ENCODE measurements at regions of chr18 and their contacts with region 1.

Region 1: DNA sequence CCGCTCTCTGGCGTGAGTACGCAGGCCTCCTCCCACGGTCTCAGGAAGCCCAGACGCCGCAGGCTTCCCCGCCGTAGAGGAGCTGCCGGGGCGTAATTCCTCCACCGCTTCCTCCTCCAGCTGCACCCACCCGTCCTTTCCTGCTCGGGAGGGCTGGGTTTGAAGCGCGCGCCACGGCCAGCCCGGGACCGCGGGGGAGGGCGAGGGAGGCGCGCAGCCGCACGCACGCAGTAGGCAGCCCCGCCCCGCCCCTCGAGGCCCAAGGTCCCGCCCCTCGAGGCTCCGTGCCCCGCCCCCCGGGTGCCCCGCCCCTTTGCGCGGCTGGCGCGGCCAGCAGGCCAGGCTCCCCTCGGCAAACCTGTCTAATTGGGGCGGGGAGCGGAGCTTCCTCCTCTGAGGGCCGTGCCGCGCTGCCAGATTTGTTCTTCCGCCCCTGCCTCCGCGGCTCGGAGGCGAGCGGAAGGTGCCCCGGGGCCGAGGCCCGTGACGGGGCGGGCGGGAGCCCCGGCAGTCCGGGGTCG is at the start of gene MALT1:
- DNase-seq: peak; percentile 93
- H3K4me3 Mint-ChIP-seq: peak within 1 kb of the TSS; percentile 91
- H3K27ac Mint-ChIP-seq: peak within 1 kb of the TSS; percentile 90
- H3K4me1 Mint-ChIP-seq: peaks cover 66% of the 10 kb centered on the region
- H3K27me3 Mint-ChIP-seq: no peaks in the 10 kb centered on the region
- total RNA-seq, gene MALT1: 32.4 and 34.1 TPM in 2 replicates

Region 2: DNA sequence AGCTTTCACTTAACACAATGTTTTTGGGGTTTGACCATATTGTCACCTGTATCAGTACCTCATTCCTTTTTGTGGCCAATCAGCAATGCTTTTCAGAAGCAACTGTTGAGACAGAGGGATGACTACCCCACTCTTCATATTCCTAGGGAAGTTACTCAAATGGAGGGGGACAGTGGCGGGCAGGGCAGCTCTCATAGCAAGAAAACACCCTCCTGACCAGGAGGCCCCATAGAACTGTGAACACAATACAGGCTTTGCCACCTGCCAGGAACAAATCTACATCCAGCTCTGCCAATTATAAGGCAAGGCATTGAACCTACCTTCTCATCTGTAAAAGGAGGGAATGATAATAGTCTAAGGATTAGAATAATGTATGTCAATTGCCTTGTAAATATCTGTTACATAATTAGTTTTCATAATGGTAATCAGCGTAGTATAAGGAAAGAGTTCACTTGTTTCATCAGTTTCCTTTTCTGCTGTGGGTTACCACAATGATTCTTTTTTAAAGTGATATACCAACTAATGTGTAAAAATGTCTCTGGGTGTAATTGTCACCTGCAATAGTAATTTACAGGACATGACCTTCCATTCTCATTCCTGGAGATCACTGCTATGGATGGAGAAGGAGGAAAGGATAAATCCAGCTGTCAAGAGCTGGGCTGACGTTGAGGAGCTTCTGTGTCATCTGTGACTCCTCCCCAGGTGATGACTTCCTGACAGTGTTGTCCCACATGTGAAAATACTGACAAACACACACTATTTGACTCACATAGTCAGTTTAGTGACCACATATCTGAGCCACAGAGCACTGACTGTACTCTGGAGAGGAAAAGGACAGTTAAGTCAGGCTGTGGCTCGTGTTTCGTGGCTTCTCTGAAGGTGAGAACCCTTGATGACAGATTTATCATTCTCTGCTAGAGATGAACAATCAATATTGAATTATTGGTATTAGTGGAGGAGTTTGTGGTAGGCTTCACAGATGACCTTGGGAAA is 55.7 kb before region 1 on chr18:
- intact Hi-C with region 1: loop called (anchors 1 kb)
- DNase-seq: peak; percentile 71
- H3K4me3 Mint-ChIP-seq: peak overlapping the region; percentile 63
- H3K27ac Mint-ChIP-seq: peak overlapping the region; percentile 96
- H3K4me1 Mint-ChIP-seq: peaks cover 41% of the 10 kb centered on the region
- H3K27me3 Mint-ChIP-seq: peaks cover 8% of the 10 kb centered on the region

Region 3: GRCh38 chr18:58649966-58650816 is 21.0 kb before region 1 on chr18:
- intact Hi-C with region 1: loop called (anchors 1 kb)
- DNase-seq: peak; percentile 73
- H3K4me3 Mint-ChIP-seq: peak overlapping the region; percentile 6
- H3K27ac Mint-ChIP-seq: peak overlapping the region; percentile 69
- H3K4me1 Mint-ChIP-seq: peaks cover 65% of the 10 kb centered on the region
- H3K27me3 Mint-ChIP-seq: no peaks in the 10 kb centered on the region

Region 4: GRCh38 chr18:58687871-58688308 is 16.7 kb after region 1 on chr18:
- intact Hi-C with region 1: loop called (anchors 1 kb)
- DNase-seq: peak; percentile 68
- H3K4me3 Mint-ChIP-seq: peak overlapping the region; percentile 53
- H3K27ac Mint-ChIP-seq: peak overlapping the region; percentile 83
- H3K4me1 Mint-ChIP-seq: peaks cover 60% of the 10 kb centered on the region
- H3K27me3 Mint-ChIP-seq: no peaks in the 10 kb centered on the region

Region 5: DNA sequence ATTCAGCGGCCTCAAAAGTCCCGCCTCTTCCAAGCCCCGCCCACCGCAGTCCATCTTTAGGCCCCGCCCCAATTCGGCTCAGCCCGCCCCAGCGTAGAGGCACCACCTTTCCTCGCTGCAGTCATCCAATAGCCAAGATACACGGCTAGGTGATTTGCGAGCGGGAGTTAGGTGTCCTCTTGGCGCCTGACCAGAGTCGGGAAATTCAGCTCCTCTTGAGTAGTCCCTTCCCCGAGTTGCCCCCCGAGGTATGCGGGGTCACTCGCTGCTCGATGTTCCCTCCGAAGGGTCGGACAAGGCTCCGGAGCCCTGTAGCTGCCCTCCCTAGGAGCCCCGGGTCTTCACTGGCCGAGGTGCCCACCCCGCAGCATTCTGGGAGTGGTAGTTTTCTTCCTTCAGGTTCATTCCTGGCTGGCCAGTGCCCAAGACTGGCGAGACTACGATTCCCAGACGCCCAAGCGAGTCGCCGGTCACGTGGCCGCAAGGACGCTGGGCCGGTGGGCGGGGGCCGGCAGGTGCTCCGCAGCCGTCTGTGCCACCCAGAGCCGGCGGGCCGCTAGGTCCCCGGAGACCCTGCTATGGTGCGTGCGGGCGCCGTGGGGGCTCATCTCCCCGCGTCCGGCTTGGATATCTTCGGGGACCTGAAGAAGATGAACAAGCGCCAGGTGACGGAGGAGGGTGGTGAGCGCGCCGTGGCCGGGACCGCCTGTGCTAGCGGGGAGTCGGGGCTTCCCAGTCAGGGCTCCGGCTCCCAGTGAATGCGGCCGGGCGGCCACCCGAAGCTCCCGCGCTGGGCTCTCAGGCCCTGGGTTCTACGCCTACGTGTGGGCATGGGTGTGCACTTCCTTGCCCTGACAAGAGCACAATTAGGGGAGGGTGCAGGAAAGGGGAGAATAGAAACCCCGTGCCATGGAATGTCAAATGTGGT is 468.5 kb after region 1 on chr18 and contains the start of gene SEC11C:
- intact Hi-C with region 1: loop called (anchors 5 kb)
- DNase-seq: peak; percentile 96
- H3K4me3 Mint-ChIP-seq: peak within 1 kb of the TSS; percentile 94
- H3K27ac Mint-ChIP-seq: peak within 1 kb of the TSS; percentile 98
- H3K4me1 Mint-ChIP-seq: peaks cover 34% of the 10 kb centered on the region
- H3K27me3 Mint-ChIP-seq: peaks cover 19% of the 10 kb centered on the region
- total RNA-seq, gene SEC11C: 147 and 148 TPM in 2 replicates

Region 6: DNA sequence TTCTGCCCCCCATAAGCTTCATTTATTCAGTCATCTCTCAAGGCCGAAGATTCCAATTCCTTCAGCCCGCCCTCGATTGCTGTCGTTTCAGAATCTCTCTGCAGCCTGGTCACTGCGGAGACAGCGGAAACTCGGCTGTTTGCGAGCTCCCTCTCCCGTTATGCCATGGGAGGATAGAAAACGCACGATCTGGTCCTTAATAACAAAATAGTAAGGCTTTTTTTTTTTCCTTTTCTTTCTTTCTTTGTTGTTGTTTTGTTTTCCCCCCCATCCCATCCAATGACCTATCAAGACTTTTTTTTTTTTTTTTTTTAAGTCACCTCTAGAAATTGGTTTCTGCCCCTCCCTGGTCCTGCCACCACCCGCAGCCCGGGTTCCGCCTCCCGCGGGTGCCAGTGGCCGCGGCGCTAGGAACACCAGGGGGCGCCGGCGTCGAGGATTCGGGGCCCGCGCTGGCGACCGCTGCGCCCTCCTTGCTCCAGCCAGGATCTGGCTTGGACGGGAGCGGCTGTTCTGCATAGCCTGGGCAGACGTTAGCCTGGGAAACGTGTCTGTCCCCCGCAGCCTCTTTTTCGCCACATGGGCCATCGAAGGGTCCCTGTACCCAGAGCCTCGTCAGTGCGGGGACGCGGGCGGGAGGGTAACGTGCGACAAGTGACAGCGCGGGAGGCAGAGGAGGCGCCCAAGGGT is 637.2 kb after region 1 on chr18:
- intact Hi-C with region 1: no loop called
- DNase-seq: peak; percentile 61
- H3K4me3 Mint-ChIP-seq: peak overlapping the region; percentile 63
- H3K27ac Mint-ChIP-seq: no peak overlapping the region
- H3K4me1 Mint-ChIP-seq: no peaks in the 10 kb centered on the region
- H3K27me3 Mint-ChIP-seq: peaks cover 44% of the 10 kb centered on the region